ENCODE measurements at regions of chr1 and their contacts with region 1.

Region 1: DNA sequence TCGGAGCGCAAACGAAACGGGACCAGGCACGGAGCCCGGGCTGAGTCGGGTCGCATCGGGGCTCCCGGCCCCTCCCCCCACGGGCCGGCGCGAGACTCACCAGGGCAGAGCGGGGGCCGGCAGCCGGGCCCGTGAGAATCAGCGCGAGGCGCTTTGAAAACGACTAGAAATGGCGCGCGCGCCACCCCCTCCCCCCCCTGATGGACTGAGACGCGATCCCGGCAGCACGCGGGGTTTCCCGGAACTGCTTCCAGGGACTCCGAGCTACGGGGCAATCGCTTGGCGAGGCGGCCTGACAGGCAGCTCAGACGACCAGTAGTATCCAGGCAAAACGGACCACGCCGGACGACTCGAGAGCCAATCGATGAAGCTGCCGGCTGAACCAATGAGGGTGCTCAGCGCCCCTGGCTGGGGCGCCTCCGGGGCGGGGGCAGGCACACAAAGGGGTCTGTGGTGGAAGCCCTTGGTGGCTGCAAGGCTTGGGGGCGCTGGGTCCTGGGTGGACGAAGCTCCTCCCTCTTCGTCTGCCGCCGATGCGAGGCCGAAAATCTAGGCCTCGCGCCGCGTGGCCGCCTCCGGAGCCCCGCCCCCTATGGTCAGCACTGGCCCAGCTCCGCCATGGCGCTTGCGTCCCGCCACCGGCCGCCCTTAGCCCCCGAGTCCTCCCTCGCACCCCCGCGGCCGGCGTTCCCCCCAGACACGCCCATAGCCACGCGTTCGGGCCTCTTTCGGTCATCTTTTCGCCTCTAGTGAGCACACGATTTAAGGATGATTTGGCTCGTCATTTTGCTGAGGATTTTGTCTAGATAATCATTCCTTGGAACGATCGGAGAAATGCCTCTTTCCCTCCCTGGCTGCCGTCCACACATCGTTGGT is at the start of gene HNRNPR:
- DNase-seq: peak; percentile 100
- H3K4me3 ChIP-seq: peak within 1 kb of the TSS; percentile 80
- H3K27ac ChIP-seq: peak within 1 kb of the TSS; percentile 82 to 98
- H3K4me1 ChIP-seq: no peaks in the 10 kb centered on the region
- H3K27me3 ChIP-seq: no peaks in the 10 kb centered on the region
- CTCF ChIP-seq: peak in 2 of 3 donors; percentile 3 to 9
- EP300 ChIP-seq: peak; percentile 24
- POLR2A ChIP-seq: peak; percentile 87
- total RNA-seq, gene HNRNPR: 55.9 to 173 (median 153) TPM

Region 2: DNA sequence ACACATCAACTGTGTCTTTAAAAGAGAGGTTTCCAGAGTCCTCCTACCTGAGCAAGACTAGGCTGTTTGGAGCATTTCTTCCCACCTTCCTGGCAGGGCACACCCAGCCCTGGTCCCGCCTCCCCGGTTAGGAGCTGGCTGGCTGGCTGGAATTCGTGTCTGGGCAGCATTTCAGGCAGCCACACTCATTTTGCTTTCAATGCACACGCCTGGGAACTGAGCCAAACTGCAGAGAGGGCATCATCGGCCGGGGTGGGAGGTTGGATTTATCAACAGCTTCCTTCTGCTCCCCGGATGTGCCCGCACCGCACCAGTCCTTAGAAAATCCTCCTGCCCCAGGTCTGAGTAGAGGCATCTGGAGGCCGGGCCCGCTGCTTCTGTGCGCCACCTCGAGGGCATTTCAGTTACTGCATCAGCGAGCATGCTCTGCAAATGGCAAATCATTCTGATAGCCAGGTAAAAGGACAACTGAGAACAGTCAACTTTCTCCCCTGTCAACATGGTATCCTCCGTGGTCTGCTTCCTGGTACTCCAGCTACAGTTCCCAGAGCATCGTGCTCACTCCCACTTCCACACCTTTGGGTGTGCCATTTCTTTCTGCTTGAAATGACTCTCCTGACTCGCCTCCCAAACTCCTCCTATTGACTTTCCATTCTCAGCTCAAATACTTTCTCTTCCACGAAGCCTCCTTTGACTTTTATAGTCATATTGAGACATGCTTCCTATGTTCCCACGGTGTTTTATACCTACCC is 59.6 kb after region 1 on chr1:
- intact Hi-C with region 1: loop called in 1 of 4 experiments (anchors 10 kb)
- DNase-seq: peak; percentile 87 to 93 (median 90)
- H3K4me3 ChIP-seq: no peak overlapping the region
- H3K27ac ChIP-seq: peak overlapping the region in 1 of 2 donors; percentile 49
- H3K4me1 ChIP-seq: peaks cover 9% of the 10 kb centered on the region
- H3K27me3 ChIP-seq: no peaks in the 10 kb centered on the region
- CTCF ChIP-seq: peak; percentile 91 to 93 (median 93)
- EP300 ChIP-seq: no peak
- POLR2A ChIP-seq: no peak

Region 3: GRCh38 chr1:23539698-23540266 is 195.4 kb after region 1 on chr1:
- intact Hi-C with region 1: loop called in 1 of 4 experiments (anchors 10 kb)
- DNase-seq: peak; percentile 77 to 88 (median 86)
- H3K4me3 ChIP-seq: no peak overlapping the region
- H3K27ac ChIP-seq: no peak overlapping the region
- H3K4me1 ChIP-seq: no peaks in the 10 kb centered on the region
- H3K27me3 ChIP-seq: no peaks in the 10 kb centered on the region
- CTCF ChIP-seq: peak; percentile 79 to 89 (median 82)
- EP300 ChIP-seq: no peak
- POLR2A ChIP-seq: no peak

Region 4: DNA sequence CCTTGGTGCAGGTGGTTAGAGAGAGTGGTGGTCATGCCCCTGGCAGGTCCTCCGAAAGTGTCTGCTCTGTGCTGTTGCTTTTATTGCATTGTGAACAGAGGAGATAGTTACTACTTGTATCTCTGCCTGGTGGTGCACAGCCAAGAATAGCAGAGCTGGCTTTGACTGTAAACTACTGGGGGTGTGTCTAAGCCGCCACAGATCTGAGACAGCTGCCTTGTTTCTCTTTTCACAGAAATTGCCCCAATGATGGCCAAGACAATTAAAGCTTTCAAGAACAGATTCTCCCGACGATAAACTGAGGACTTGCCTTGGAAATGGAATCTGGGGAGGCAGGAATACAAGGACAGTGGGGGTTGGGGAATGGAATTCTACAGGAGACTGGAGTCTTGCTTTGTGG is 414.9 kb after region 1 on chr1:
- intact Hi-C with region 1: no loop called
- DNase-seq: no peak
- H3K4me3 ChIP-seq: no peak overlapping the region
- H3K27ac ChIP-seq: no peak overlapping the region
- H3K4me1 ChIP-seq: no peaks in the 10 kb centered on the region
- H3K27me3 ChIP-seq: no peaks in the 10 kb centered on the region
- CTCF ChIP-seq: no peak
- EP300 ChIP-seq: no peak
- POLR2A ChIP-seq: no peak

Region 5: GRCh38 chr1:24735509-24736375 is 1391.4 kb after region 1 on chr1:
- intact Hi-C with region 1: loop called in 1 of 4 experiments (anchors 10 kb)
- DNase-seq: peak; percentile 46 to 61 (median 48)
- H3K4me3 ChIP-seq: no peak overlapping the region
- H3K27ac ChIP-seq: peak overlapping the region in 1 of 2 donors; percentile 5
- H3K4me1 ChIP-seq: peaks cover 3% of the 10 kb centered on the region
- H3K27me3 ChIP-seq: no peaks in the 10 kb centered on the region
- CTCF ChIP-seq: no peak
- EP300 ChIP-seq: no peak
- POLR2A ChIP-seq: no peak

Measured in ovary (tissue), 10 donors.